Gastrocnemius medialis (tissue), 4 donors: ENCODE measurements at regions of chr22 and their contacts with region 1.

Region 1: GRCh38 chr22:42856865-42857704 is at the start of gene ARFGAP3:
- DNase-seq: peak; percentile 86 to 91
- ATAC-seq: peak; percentile 84 to 86
- H3K4me3 ChIP-seq: peak within 1 kb of the TSS; percentile 75 to 90 (median 84)
- H3K27ac ChIP-seq: peak within 1 kb of the TSS; percentile 93 to 99 (median 96)
- H3K4me1 ChIP-seq: peaks cover 32 to 34% of the 10 kb centered on the region in 2 donors
- H3K27me3 ChIP-seq: no peaks in the 10 kb centered on the region
- CTCF ChIP-seq: no peak
- POLR2A ChIP-seq: peak; percentile 96 to 97
- total RNA-seq, gene ARFGAP3: 28.2 to 43.8 (median 36.0) TPM

Region 2: DNA sequence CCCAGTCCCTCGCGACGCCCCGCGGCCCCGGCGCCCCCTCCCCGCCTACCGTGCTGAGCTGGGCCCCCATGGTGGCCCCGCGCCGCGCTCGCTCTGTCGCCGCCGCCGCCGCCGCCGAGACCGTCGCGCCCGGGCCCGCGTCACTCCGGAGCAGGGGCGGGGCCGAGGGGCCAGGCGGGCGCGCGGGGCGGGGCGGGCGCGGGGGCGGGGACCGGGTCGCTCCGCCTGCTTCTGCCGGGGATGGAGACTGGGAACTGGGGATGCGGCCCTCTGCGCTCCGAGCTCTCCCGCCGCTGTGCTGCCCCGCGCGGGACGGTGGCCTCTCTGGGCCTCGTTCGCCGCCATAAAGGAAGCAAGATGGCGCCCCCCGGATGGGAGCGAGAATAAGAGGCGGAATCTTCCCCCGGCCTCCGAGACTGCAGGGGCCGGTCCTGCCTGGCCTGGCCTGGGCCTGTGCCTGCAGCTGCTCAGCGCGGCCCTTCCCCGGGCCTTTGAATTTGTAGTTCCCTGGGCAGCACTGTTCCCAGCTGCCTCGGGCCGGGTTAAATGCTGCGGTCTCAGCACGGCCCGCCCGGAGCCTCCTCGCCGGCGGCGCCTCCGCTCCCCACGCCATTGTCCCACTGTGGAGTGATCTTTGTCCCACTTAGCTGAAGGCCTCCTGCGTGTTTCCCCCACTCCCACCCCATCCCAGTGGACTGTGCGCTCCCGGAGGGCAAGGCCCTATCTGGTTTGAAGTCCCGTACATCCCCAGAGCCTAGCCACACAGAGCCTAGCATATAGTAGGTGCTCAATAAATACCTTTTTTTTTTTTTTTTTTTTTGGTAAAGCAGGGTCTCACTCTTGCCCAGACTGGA is 207.6 kb before region 1 on chr22 and contains the start of gene CYB5R3:
- in situ Hi-C with region 1: no loop called
- intact Hi-C with region 1: loop called (anchors 5 kb)
- DNase-seq: peak; percentile 71 to 76
- ATAC-seq: peak; percentile 75
- H3K4me3 ChIP-seq: peak within 1 kb of the TSS; percentile 77 to 100 (median 93)
- H3K27ac ChIP-seq: peak within 1 kb of the TSS; percentile 92 to 99 (median 98)
- H3K4me1 ChIP-seq: peaks cover 41 to 44% of the 10 kb centered on the region in 2 donors
- H3K27me3 ChIP-seq: no peaks in the 10 kb centered on the region
- CTCF ChIP-seq: peak in 1 of 5 experiments; percentile 11
- POLR2A ChIP-seq: peak; percentile 41 to 75
- total RNA-seq, gene CYB5R3: 44.3 to 163 (median 105) TPM

Region 3: GRCh38 chr22:42688241-42689211 is 168.6 kb before region 1 on chr22:
- in situ Hi-C with region 1: no loop called
- intact Hi-C with region 1: loop called (anchors 2 kb)
- DNase-seq: peak; percentile 95 to 98
- ATAC-seq: peak; percentile 92 to 97
- H3K4me3 ChIP-seq: peak overlapping the region in 3 of 4 donors; percentile 3 to 37 (median 26)
- H3K27ac ChIP-seq: peak overlapping the region; percentile 91 to 99 (median 97)
- H3K4me1 ChIP-seq: peaks cover 70 to 74% of the 10 kb centered on the region in 2 donors
- H3K27me3 ChIP-seq: no peaks in the 10 kb centered on the region
- CTCF ChIP-seq: no peak
- POLR2A ChIP-seq: peak; percentile 87 to 89

Region 4: GRCh38 chr22:42805016-42805997 is 51.8 kb before region 1 on chr22:
- in situ Hi-C with region 1: no loop called
- intact Hi-C with region 1: no loop called
- DNase-seq: peak; percentile 42 to 73
- ATAC-seq: peak; percentile 48 to 58
- H3K4me3 ChIP-seq: no peak overlapping the region
- H3K27ac ChIP-seq: peak overlapping the region; percentile 65 to 88 (median 78)
- H3K4me1 ChIP-seq: peaks cover 21 to 51% of the 10 kb centered on the region in 2 donors
- H3K27me3 ChIP-seq: no peaks in the 10 kb centered on the region
- CTCF ChIP-seq: no peak
- POLR2A ChIP-seq: no peak

Region 5: DNA sequence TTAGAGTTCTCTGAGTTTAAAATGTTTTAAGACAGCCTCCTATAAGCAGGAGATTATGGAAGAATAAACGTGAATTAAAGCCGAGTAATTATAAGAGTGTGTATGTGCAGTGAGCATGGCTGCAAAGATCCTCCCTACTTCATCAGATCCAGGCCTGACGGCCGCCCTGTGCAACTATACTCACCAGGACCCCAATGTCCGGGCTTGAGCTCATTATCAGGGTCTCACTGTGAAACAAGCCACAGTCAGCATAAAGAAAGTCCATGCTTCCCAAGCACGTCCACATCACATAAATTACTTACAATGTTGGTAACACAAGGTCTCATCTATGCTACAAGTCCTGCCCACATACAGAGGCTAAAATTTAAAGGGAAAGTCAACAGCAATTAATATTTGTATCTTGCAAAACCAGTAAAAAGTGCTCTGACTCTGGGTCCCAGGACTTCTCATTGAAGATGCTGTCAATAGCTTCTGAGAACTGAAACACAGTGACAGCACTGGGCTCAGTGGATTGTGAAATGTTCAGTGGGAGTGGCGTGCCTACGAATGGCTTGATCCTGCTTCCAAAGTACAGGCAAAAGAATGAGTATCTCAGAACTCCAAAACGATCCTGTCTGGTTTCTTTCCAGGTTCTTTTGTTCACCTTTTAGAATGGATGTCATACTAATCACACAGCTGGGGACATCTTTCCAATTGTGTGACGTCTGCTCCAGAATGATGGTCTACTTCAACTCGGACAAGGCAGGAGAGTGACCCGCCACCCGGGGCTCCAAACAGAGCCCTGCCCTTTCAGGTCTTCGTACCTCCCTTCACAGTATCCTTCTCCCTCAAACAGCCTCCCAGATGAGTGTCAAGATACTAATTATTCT is 72.1 kb after region 1 on chr22:
- in situ Hi-C with region 1: no loop called
- intact Hi-C with region 1: no loop called
- DNase-seq: peak in 1 of 2 donors; percentile 57
- ATAC-seq: peak; percentile 47 to 56
- H3K4me3 ChIP-seq: no peak overlapping the region
- H3K27ac ChIP-seq: peak overlapping the region; percentile 36 to 95 (median 83)
- H3K4me1 ChIP-seq: peaks cover 83 to 86% of the 10 kb centered on the region in 2 donors
- H3K27me3 ChIP-seq: no peaks in the 10 kb centered on the region
- CTCF ChIP-seq: no peak
- POLR2A ChIP-seq: no peak

Region 6: GRCh38 chr22:42959576-42960509 is 102.8 kb after region 1 on chr22:
- in situ Hi-C with region 1: loop called in 1 of 4 experiments (anchors 25 kb)
- intact Hi-C with region 1: no loop called
- DNase-seq: peak; percentile 50 to 72
- ATAC-seq: peak; percentile 93 to 98
- H3K4me3 ChIP-seq: peak overlapping the region; percentile 32 to 46 (median 38)
- H3K27ac ChIP-seq: peak overlapping the region; percentile 35 to 79 (median 56)
- H3K4me1 ChIP-seq: peaks cover 31 to 59% of the 10 kb centered on the region in 2 donors
- H3K27me3 ChIP-seq: no peaks in the 10 kb centered on the region
- CTCF ChIP-seq: no peak
- POLR2A ChIP-seq: no peak

Region 7: GRCh38 chr22:43036282-43036829 is 179.3 kb after region 1 on chr22:
- in situ Hi-C with region 1: loop called in 2 of 4 experiments (anchors 10 to 25 kb)
- intact Hi-C with region 1: no loop called
- DNase-seq: peak in 1 of 2 donors; percentile 28
- ATAC-seq: peak; percentile 64 to 74
- H3K4me3 ChIP-seq: no peak overlapping the region
- H3K27ac ChIP-seq: peak overlapping the region in 3 of 4 donors; percentile 7 to 51 (median 51)
- H3K4me1 ChIP-seq: no peaks in the 10 kb centered on the region
- H3K27me3 ChIP-seq: no peaks in the 10 kb centered on the region
- CTCF ChIP-seq: no peak
- POLR2A ChIP-seq: no peak

Region 8: GRCh38 chr22:43262990-43263644 is 406.0 kb after region 1 on chr22:
- in situ Hi-C with region 1: no loop called
- intact Hi-C with region 1: no loop called
- DNase-seq: no peak
- ATAC-seq: no peak
- H3K4me3 ChIP-seq: no peak overlapping the region
- H3K27ac ChIP-seq: no peak overlapping the region
- H3K4me1 ChIP-seq: peaks cover 4 to 9% of the 10 kb centered on the region in 2 donors
- H3K27me3 ChIP-seq: peaks cover 0 to 31% (median 12%) of the 10 kb centered on the region in 3 donors
- CTCF ChIP-seq: no peak
- POLR2A ChIP-seq: no peak